Vagina (tissue), 2 donors: ENCODE measurements at regions of chr11 and their contacts with region 1.

Region 1: DNA sequence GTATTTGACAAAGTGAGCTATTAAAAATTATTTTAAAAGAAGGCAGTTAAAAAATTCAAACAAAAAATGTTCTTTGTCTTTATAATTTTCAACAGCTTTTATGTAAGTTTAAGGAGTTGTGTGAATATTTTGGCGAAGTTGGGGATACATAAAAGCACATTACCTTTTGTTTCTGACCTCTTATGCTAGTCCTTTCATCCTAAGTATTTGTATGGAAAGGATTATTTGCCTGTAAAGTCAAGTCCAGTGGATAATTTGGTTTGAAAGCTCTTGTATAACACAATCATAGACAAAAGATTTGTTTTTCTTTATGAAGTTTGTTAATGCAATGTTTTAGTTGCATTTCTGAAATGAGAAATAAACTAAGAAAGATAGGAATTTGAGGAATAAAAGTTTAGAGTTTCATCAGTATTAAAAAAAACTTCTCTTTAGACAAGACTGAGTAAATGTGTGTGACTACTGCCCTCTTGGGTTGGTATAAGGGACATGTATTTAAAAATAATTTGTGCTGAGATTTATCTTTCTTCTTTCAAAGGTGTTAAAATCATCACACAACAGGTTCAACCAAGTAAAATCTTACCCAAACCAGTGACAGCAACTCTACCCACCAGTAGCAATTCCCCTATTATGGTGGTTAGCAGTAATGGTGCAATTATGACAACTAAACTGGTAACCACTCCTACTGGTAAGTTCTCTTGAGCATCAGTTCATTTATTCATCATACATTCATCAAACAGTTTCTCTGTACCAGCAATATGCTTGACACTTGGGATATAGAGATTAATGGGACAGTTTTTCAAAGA is 68.2 kb downstream of the EMSY start:
- DNase-seq: no peak
- H3K4me3 ChIP-seq: no peak overlapping the region
- H3K27ac ChIP-seq: no peak overlapping the region
- H3K4me1 ChIP-seq: no peaks in the 10 kb centered on the region
- H3K27me3 ChIP-seq: no peaks in the 10 kb centered on the region
- CTCF ChIP-seq: no peak
- POLR2A ChIP-seq: no peak

Region 2: GRCh38 chr11:76501526-76502210 is 11.4 kb before region 1 on chr11:
- intact Hi-C with region 1: loop called (anchors 1 kb)
- DNase-seq: no peak
- H3K4me3 ChIP-seq: no peak overlapping the region
- H3K27ac ChIP-seq: no peak overlapping the region
- H3K4me1 ChIP-seq: no peaks in the 10 kb centered on the region
- H3K27me3 ChIP-seq: no peaks in the 10 kb centered on the region
- CTCF ChIP-seq: no peak
- POLR2A ChIP-seq: no peak

Region 3: GRCh38 chr11:76588455-76589325 is 75.6 kb after region 1 on chr11:
- intact Hi-C with region 1: no loop called
- DNase-seq: peak in 1 of 2 donors; percentile 79
- H3K4me3 ChIP-seq: no peak overlapping the region
- H3K27ac ChIP-seq: peak overlapping the region; percentile 46
- H3K4me1 ChIP-seq: no peaks in the 10 kb centered on the region
- H3K27me3 ChIP-seq: no peaks in the 10 kb centered on the region
- CTCF ChIP-seq: no peak
- POLR2A ChIP-seq: no peak

Region 4: DNA sequence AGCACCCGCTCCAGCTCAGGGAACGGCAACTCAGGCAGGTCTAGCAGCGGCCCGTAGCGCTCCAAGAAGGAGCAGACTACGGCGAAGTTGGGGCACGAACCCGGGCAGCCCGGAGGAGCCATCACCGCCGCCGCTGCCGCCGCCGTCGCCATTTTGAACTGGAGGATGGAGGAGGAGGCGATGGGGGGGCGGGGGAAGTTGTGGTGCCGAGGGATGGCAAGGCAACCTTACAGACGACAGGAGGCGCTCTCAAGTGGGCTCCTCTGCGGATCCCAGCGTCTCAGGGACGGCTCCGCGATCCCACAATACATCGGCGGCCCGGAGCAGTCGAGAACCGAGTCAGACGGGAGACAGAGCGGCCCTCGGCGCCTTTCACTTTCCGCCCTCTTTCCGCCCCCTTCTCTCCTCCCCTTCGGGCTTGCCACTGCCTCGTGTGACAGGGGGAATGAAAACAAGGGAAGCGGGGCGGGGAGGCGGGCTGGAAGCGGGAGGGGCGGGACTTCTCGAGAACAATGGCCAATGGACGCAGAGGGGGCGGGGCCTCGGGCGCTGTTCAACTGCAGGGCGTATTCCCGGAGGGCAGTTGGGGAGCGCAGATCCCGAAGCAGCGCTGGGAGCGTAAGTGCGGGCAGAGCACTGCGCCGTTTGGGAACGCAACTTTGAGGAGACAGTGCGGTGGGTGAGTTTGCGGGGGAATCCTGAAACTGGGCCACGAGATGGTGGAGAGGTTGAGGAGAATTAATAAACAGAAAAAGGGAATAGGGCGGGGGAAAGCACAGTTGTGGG is 1307.7 kb after region 1 on chr11 and contains the starts of genes AAMDC and RSF1:
- intact Hi-C with region 1: no loop called
- DNase-seq: peak; percentile 97 to 99
- H3K4me3 ChIP-seq: peak within 1 kb of the TSS; percentile 71 to 86
- H3K27ac ChIP-seq: peak within 1 kb of the TSS; percentile 98
- H3K4me1 ChIP-seq: peaks cover 52% of the 10 kb centered on the region
- H3K27me3 ChIP-seq: no peaks in the 10 kb centered on the region
- CTCF ChIP-seq: peak; percentile 24 to 61 (median 45)
- POLR2A ChIP-seq: peak in 1 of 2 donors; percentile 78
- total RNA-seq, gene AAMDC: 18.2 TPM
- total RNA-seq, gene RSF1: 60.4 TPM